Activated CD4-positive, alpha-beta memory T cell treated with anti-CD3 and anti-CD28 coated beads, Interleukin-2, amount 10 ng/mL, durations not matched to agents 7 days and 5 days (primary cell): ENCODE measurements at regions of chr5 and their contacts with region 1.

Region 1: GRCh38 chr5:103224118-103224893 is 34.3 kb upstream of the MACIR start:
- DNase-seq: peak; percentile 45
- H3K4me3 Mint-ChIP-seq: no peak overlapping the region
- H3K27ac Mint-ChIP-seq: no peak overlapping the region
- H3K4me1 Mint-ChIP-seq: peaks cover 10% of the 10 kb centered on the region
- H3K27me3 Mint-ChIP-seq: peaks cover 27% of the 10 kb centered on the region

Region 2: GRCh38 chr5:103139264-103139865 is 84.9 kb before region 1 on chr5:
- CTCF ChIA-PET with region 1: interaction called, 18 read pairs
- POLR2A ChIA-PET with region 1: no interaction called
- DNase-seq: peak; percentile 83
- H3K4me3 Mint-ChIP-seq: no peak overlapping the region
- H3K27ac Mint-ChIP-seq: no peak overlapping the region
- H3K4me1 Mint-ChIP-seq: peaks cover 2% of the 10 kb centered on the region
- H3K27me3 Mint-ChIP-seq: no peaks in the 10 kb centered on the region

Region 3: DNA sequence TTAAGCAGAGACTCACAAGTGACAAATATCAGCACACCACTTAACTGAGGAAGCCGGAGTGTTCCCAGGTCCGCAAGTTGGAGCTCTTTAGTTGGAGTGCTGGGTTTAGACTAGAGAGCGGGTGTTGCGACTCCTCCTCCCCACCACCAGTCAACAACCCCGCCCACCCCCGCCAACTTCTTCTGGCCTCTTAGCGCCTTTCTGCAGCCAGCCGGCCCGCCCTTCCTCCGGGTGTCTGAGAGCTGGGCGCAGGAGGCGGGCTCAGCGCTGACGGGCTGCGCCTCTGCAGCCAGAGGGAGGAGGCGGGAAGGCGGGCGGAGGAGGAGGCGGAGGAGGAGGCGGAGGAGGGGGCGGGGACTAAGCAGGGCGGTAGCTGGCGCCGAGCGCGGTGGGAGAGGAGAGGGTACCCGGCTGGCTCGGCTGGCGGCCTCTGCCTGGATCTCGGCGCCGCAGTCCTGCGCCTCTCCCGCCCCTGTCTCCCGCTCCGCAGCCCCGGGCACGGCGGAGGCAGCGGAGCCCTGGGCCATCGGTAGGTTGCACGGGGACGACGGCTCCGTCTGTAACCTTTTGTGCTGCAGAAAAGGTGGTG is 34.2 kb after region 1 on chr5 and contains the start of gene MACIR:
- CTCF ChIA-PET with region 1: interaction called, 19 read pairs
- POLR2A ChIA-PET with region 1: interaction called, 10 read pairs
- DNase-seq: peak; percentile 96
- H3K4me3 Mint-ChIP-seq: peak within 1 kb of the TSS; percentile 75
- H3K27ac Mint-ChIP-seq: peak within 1 kb of the TSS; percentile 65
- H3K4me1 Mint-ChIP-seq: peaks cover 27% of the 10 kb centered on the region
- H3K27me3 Mint-ChIP-seq: peaks cover 9% of the 10 kb centered on the region
- total RNA-seq, gene MACIR: 6.3 to 7.4 TPM

Region 4: DNA sequence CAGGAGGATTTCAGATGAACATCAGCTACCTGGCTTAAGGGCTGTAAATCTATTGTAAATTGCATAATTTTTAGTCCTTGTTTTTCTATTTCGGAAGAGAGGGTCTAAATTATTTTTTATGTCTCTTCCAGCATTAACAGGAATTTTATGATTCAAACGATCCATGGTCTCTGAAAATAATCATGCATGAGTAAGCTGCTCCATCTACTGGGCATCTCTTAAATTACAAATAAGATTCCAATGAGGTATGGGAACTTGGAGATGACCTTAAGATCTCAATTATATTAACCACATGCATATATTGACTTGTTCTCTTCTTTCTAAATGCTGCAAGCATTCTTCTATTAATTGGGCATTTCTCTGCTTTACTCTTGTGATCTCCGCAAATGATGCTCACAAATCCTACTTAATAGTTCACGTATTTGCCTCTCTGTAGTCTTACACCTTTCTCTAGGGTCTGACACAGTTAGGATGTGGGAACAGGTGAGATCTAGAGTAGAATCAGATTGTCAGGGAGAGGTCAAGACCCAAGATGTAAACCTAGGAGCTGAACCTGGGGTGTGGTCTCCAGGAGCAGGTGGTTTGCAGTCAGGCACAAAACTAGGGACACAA is 251.4 kb after region 1 on chr5:
- CTCF ChIA-PET with region 1: interaction called, 10 read pairs
- POLR2A ChIA-PET with region 1: no interaction called
- DNase-seq: no peak
- H3K4me3 Mint-ChIP-seq: no peak overlapping the region
- H3K27ac Mint-ChIP-seq: no peak overlapping the region
- H3K4me1 Mint-ChIP-seq: no peaks in the 10 kb centered on the region
- H3K27me3 Mint-ChIP-seq: peaks cover 27% of the 10 kb centered on the region